GM13977 (cell line): ENCODE measurements at regions of chrX and their contacts with region 1.

Region 1: DNA sequence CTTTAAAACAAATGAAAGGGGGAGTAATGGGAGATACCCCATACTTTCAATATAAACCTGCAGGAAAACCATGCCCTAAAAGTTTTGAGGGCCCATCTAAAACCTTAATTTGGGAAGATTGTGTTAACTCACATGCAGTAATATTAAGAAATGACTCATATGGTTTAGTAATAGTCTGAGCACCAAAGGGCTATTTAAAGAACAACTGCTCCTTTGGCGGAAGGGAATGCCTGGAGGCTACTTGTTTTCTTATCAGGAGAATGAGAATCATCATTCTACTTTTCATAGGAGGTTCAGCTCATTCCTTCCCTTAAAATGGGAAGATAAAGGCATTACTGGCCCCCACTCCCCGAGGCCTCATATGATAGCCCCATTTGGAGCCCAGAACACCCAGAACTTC is 47.6 kb downstream of the SPIN3 start:
- DNase-seq: no peak
- CTCF ChIP-seq: no peak

Region 2: GRCh38 chrX:57044245-57044644 is 96.5 kb after region 1 on chrX:
- in situ Hi-C with region 1: loop called (anchors 25 kb)
- DNase-seq: no peak
- CTCF ChIP-seq: no peak

Region 3: DNA sequence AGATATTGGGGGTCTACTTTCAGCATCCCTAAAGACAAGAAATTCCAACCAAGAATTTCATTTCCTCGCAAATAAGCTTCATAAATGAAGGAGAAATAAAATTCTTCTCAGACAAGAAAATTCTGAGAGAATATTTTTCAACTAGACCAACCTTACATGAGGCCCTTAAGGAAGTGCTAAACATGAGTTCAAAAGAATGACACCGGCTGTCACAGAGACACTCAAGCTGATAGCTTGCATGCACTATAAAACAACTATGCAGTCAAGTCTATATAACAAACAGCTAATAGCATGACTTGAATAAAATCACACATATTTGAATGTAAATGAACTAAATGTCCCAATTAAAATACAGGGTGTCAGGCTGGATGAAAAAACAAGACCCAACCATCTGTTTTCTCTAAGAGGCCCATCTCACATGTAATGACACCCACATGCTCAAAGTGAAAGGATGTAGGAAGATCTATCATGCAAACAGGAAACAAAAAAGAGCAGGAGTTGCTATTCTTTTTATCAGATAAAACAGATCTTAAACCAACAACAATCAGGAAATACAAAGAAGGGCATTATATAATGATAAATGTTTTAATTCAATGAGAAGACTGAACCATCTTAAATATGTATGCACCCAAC is 366.0 kb after region 1 on chrX:
- in situ Hi-C with region 1: no loop called
- DNase-seq: no peak
- CTCF ChIP-seq: no peak